Dorsolateral prefrontal cortex (tissue), 120 donors: ENCODE measurements at regions of chr1 and their contacts with region 1.

Region 1: DNA sequence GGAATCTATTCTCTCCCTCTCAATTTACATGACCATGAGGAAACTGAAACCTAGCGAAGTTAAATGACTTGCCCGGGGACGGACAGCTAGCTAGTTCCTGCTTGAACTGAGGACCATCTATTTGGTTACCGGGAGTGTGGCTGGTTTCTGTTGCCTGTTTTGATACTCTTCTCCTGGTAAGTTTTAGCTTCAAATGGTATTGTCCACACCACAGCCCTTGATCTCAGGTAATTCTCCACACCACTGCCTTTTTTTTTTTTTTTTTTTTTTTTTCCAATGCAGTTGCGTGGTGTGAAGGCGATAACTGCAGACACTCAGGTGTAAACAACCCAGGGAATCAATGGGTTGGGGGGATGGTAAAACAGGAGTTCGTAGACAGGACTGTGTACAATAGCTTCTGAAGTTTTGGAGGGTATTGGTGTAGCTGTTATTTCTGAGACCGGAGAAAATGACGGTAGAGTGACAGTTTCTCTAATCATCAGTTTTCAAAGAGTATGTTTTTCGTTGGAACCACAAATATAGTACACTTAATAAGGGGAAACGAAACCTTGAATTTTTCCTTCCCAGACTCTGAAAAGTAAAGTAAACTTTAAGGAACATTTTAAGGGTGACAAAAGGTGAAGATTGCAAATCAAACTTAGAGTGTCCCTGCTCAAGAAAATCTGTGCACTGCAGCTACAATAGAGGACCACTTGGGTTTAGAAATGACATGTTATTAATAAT is 125.3 kb upstream of the CACYBP start:
- DNase-seq: no peak
- H3K4me3 ChIP-seq: peak overlapping the region in 30 of 59 donors; percentile 0 to 41 (median 11)
- H3K27ac ChIP-seq: peak overlapping the region in 5 of 59 donors; percentile 12 to 22 (median 15)
- H3K27me3 ChIP-seq: no peaks in the 10 kb centered on the region
- CTCF ChIP-seq: no peak

Region 2: DNA sequence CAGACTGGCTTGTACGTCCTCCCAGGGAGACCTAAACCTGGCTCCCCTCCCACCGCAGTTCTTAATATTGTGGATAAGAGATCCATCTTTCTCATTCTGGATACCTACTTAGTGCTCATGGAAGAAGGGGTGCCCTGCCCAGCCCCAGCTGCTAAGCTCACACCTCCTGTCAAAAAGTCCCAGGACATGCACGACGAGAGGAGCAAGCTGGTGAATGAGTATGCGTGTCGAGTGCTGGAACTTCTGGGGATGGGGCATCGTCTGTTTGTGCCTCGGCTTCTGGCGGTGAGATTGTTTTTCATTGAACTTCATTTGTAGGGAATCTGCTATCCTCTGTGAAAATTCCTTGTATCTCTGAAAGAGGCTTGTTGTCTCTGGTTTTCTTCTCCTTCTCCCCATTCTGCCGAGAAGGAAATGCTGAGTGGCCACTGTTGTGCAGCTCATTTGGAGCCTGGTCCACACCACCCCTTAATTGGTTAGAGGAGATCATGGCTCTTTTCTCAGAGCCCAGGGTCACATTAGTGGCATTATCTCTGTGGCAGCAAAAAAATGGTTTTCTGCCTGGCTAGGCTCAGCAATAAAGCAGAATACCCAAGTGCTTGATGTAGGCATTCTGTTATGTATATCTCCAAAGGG is 74.2 kb before region 1 on chr1:
- intact Hi-C with region 1: loop called in 1 of 2 experiments (anchors 5 kb)
- DNase-seq: peak in 3 of 10 donors; percentile 42 to 53 (median 50)
- H3K4me3 ChIP-seq: peak overlapping the region; percentile 39 to 92 (median 71)
- H3K27ac ChIP-seq: peak overlapping the region; percentile 41 to 97 (median 89)
- H3K27me3 ChIP-seq: no peaks in the 10 kb centered on the region
- CTCF ChIP-seq: no peak

Region 3: DNA sequence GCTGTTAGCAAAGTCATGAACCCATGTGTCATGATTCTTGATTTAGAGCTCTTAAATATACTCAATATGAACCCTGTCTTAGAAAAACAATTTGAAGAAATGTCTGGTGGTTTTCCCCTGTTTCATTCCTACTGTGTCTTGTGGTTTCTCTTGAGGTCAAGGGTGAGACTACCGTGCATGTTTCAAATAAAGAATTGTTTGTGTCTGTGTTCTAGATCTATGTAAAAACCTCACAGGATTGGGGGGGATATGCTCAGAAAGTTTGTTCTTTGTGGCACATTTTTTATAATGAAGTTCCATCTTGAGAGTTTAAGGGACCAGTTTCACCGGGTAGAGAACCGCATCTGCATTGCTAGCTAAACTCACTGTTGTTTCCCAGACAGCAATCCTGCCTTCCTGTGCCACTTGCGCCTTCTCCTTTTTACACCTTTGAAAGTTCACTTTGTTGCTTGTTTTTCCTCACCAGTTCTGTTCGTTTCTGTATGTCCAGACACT is 94.3 kb after region 1 on chr1:
- intact Hi-C with region 1: loop called (anchors 10 kb)
- DNase-seq: no peak
- H3K4me3 ChIP-seq: no peak overlapping the region
- H3K27ac ChIP-seq: peak overlapping the region in 24 of 59 donors; percentile 0 to 85 (median 26)
- H3K27me3 ChIP-seq: no peaks in the 10 kb centered on the region
- CTCF ChIP-seq: no peak

Region 4: DNA sequence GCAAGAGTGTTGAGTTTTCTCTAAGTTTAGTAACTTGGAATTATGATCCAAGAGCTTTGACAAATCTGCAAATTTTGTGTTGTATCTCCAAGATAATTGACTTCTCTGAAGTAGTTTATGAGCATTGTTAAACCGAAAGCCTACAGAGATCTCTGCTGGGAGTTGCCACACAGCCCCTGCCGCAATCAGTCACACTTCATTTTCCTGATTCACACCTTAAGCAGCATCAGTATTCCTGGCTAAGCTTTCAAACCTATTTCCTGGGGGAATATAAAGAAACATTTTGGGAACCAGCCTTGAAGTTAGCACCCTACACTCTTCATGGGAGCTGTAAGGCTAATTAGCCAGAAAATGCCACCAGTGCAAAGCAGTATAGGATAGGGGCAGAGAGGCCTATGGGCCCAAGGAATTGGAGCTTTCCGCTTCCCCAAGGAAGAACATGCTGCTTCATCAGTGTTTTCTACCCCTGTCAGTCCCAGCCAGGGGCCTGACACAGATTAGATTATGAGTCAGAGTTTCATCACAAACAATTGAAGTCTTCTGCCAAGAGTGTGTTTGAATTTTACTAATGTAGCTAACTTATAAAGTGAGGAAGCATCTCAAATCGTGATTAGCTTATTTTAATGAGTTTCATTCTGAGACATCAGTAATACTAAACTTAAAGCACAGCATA is 102.1 kb after region 1 on chr1:
- intact Hi-C with region 1: loop called in 1 of 2 experiments (anchors 10 kb)
- DNase-seq: no peak
- H3K4me3 ChIP-seq: no peak overlapping the region
- H3K27ac ChIP-seq: peak overlapping the region in 55 of 59 donors; percentile 4 to 89 (median 71)
- H3K27me3 ChIP-seq: no peaks in the 10 kb centered on the region
- CTCF ChIP-seq: no peak